ENCODE measurements at regions of chr6 and their contacts with region 1.

Region 1: DNA sequence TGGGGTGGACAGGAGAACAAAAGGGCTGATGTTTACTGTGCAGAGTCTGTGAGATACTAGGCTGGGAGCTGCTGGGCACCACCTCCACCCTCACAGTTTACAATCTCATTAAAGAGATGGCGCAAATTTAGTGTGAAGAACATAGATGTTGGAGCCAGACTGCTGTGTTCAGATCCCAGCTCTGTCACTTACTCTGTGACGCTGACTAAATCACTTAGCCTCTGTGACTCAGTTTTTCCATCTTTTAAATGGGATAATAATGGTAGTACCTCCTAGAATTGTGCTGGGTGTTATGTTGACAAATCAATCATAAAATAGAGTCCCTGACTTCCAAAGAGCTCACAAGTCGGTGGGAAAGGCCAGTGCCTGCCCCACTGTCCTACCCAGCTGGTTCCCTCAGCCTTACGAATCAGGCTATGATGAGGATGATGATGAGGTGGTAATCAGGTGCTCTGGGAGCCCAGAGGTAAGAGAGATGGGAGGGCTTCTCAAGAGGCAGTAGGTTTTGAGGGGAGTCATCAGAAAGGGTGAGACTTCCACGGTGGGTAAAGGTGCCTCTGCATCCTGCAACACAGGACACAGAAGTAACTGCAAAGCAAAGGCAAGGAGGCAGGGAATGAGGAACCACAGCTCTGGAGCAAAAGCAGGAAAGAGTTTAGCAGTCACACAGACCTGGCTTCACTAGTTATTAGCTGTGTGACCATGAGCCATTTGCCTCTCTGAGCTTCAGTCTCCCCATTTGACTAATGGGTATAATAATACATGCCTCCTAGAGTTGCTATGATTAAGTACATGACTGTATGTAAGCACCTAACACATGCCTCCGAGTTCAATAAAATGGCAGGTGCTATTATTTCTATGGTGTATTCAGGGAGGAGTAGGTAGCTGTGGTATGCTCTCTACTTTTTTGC is 8.9 kb downstream of the FYN start:
- DNase-seq: no peak
- ATAC-seq: no peak
- H3K4me3 ChIP-seq: peak overlapping the region; percentile 24
- H3K4me3 Mint-ChIP-seq: peak overlapping the region; percentile 4 to 93 (median 63)
- H3K27ac ChIP-seq: peak overlapping the region; percentile 32
- H3K27ac Mint-ChIP-seq: peak overlapping the region in 8 of 9 donors; percentile 16 to 89 (median 70)
- H3K4me1 ChIP-seq: peaks cover 91 to 94% of the 10 kb centered on the region in 2 donors
- H3K4me1 Mint-ChIP-seq: peaks cover 0 to 100% (median 98%) of the 10 kb centered on the region in 7 donors
- H3K27me3 ChIP-seq: no peaks in the 10 kb centered on the region
- H3K27me3 Mint-ChIP-seq: no peaks in the 10 kb centered on the region

Region 2: GRCh38 chr6:111750753-111751684 is 113.4 kb before region 1 on chr6:
- CTCF ChIA-PET with region 1: no interaction called
- POLR2A ChIA-PET with region 1: no interaction called
- intact Hi-C with region 1: no loop called
- DNase-seq: peak in 7 of 9 donors; percentile 72 to 85 (median 81)
- ATAC-seq: peak; percentile 94
- H3K4me3 ChIP-seq: peak overlapping the region; percentile 41
- H3K4me3 Mint-ChIP-seq: peak overlapping the region; percentile 58 to 82 (median 73)
- H3K27ac ChIP-seq: peak overlapping the region; percentile 97
- H3K27ac Mint-ChIP-seq: peak overlapping the region; percentile 93 to 100 (median 98)
- H3K4me1 ChIP-seq: peaks cover 94 to 95% of the 10 kb centered on the region in 2 donors
- H3K4me1 Mint-ChIP-seq: peaks cover 67 to 100% (median 99%) of the 10 kb centered on the region in 7 donors
- H3K27me3 ChIP-seq: no peaks in the 10 kb centered on the region
- H3K27me3 Mint-ChIP-seq: no peaks in the 10 kb centered on the region

Region 3: GRCh38 chr6:111852725-111853124 is 11.7 kb before region 1 on chr6:
- CTCF ChIA-PET with region 1: interaction called, 3 read pairs
- POLR2A ChIA-PET with region 1: interaction called, 4 read pairs
- intact Hi-C with region 1: loop called (anchors 1 kb)
- DNase-seq: peak in 4 of 9 donors; percentile 30 to 45 (median 42)
- ATAC-seq: peak; percentile 29
- H3K4me3 ChIP-seq: no peak overlapping the region
- H3K4me3 Mint-ChIP-seq: peak overlapping the region in 7 of 10 donors; percentile 10 to 71 (median 51)
- H3K27ac ChIP-seq: peak overlapping the region; percentile 41
- H3K27ac Mint-ChIP-seq: peak overlapping the region in 7 of 9 donors; percentile 57 to 88 (median 82)
- H3K4me1 ChIP-seq: peaks cover 57 to 87% of the 10 kb centered on the region in 2 donors
- H3K4me1 Mint-ChIP-seq: peaks cover 0 to 89% (median 77%) of the 10 kb centered on the region in 7 donors
- H3K27me3 ChIP-seq: no peaks in the 10 kb centered on the region
- H3K27me3 Mint-ChIP-seq: no peaks in the 10 kb centered on the region